OCI-LY7 (cell line): ENCODE measurements at regions of chr2 and their contacts with region 1.

Region 1: DNA sequence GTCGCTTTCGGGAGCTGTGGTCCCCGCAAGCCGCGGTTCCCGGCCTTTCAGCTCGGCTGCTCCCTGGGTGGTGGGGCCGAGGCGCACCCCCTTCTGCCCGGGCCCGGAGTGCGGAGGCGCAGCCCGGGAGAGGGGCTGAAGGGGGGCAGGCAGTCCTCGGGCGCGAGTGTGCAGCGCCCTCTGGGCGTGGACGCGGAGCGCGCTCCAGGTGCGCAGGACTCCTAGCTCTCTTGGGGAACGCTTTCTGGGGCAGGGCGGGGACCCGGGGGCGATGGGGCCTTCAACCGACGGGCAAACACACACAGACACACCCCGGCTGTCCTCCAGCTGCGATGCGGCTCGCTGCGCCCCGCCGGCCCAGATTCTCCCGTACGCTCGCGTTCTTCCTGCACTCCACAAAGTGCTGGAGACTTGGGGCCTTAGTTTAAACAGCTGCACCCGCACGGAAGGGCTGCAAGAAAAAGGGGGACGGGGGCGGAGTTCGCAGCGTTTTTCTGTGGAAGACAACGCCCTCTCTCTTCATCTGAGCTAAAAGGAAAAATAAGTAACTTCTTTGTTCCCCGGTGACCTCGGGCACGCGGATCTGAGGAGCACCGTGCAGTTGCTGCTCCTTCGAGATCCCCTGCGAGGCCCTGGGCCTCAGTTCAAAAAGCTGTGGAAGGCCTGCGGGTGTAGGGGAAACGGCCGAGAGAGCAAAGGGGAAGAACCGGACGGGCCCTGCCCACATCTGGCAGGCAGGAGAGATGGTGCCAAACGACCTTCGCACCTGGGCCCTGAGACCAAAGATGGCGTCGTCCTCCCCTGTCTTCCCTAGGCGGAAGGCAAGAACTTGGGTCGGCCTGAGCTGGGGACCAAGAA is 593 bp upstream of the SDC1 start:
- DNase-seq: peak; percentile 29
- H3K4me3 ChIP-seq: no peak overlapping the region
- H3K27ac ChIP-seq: no peak overlapping the region
- H3K4me1 ChIP-seq: peaks cover 6% of the 10 kb centered on the region
- CTCF ChIP-seq: peak; percentile 65

Region 2: GRCh38 chr2:19963386-19963785 is 262.1 kb before region 1 on chr2:
- CTCF ChIA-PET with region 1: no interaction called
- POLR2A ChIA-PET with region 1: no interaction called
- intact Hi-C with region 1: no loop called
- DNase-seq: no peak
- H3K4me3 ChIP-seq: no peak overlapping the region
- H3K27ac ChIP-seq: no peak overlapping the region
- H3K4me1 ChIP-seq: no peaks in the 10 kb centered on the region
- CTCF ChIP-seq: no peak

Region 3: GRCh38 chr2:20135631-20136050 is 89.9 kb before region 1 on chr2:
- CTCF ChIA-PET with region 1: no interaction called
- POLR2A ChIA-PET with region 1: no interaction called
- intact Hi-C with region 1: loop called (anchors 10 kb)
- DNase-seq: peak; percentile 55
- H3K4me3 ChIP-seq: no peak overlapping the region
- H3K27ac ChIP-seq: no peak overlapping the region
- H3K4me1 ChIP-seq: no peaks in the 10 kb centered on the region
- CTCF ChIP-seq: peak; percentile 76